Posterior cingulate gyrus (tissue), 11 donors: ENCODE measurements at regions of chr17 and their contacts with region 1.

Region 1: GRCh38 chr17:57855391-57856035 is 5.7 kb upstream of the MRPS23 start:
- DNase-seq: no peak

Region 2: GRCh38 chr17:57892146-57892828 is 36.8 kb after region 1 on chr17:
- intact Hi-C with region 1: loop called (anchors 5 kb)
- DNase-seq: peak in 9 of 10 donors; percentile 73 to 98 (median 80)